GM10248 (cell line): ENCODE measurements at regions of chr6 and their contacts with region 1.

Region 1: DNA sequence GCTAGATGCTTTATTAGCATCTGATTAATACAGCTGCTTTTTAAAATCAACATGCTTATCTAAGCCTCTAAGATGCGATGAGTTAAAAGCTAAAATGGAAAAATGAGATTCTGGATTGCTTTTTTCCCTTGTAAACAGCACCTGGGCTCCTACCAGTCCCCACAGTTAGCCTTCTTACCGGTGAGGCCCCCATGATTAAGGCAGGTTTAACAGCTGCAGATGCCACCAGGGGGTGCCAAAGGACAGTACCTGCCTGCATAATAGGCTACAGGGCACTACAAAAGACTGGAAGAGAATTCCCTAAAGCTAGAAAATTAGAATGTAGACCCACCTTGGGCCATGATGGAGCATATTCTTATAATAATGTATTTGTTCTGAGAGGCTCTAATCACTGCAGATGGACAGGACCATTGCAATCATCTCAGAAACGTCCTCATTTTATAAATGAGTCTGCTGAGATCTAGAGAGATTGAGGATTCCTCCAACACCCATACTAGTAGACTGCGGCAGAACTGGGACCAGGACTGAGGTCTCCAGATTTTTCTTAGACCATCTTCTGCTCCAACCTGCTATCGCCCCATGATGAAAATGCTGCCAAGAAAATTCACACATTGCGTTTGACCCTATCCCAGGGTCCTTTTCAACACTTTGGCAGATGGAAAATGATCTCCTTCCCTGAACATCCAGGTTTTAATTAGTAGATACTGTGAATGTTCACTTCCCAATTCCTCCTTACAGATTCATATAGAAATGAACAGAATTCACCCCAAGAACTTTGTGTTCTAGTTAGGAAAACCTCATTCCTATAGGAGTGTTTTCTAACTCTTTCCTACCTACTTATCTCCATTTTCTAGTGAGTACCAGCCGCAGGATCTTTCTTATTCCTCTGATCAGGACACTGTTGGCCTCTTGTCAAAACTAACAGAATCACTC is 148.8 kb downstream of the RPS12 start:
- DNase-seq: peak; percentile 35
- CTCF ChIP-seq: peak; percentile 82

Region 2: DNA sequence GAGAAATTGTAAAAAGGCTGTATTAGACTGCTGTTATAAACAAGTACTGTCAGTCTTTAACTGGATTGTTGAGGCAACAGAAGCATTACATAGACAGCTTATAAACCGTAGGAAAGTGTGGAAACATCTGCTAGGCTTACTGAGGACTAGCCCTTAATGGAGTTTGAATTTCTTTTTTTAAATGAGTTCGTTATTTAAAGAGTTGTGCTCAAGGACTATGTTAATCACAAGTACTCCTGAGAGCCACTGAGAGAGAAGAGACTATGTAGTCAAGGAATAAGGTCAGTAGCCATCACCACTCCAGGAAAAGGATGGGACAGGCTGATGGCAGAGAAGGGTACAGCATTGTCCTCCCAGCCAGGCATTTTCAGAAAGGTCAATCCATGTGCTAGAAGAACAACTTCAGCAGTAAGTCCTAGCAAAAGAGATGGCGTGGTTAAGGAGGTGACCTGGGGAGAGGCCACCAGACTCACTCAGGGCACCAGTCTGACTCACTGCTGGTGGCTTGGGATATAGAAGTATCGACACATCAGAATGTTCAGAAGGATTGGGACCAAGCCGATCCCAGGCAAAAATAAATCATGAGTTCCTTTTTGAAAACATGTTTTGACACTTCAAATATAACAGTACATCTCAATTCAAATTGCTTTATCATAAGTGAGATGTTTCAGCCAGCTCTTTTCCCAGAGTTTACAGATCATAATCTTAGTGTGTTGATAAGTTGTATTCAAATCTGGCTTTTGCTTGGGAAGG is 142.4 kb before region 1 on chr6:
- CTCF ChIA-PET with region 1: interaction called, 14 read pairs
- POLR2A ChIA-PET with region 1: no interaction called
- DNase-seq: no peak
- CTCF ChIP-seq: no peak

Region 3: GRCh38 chr6:132830334-132830751 is 132.9 kb before region 1 on chr6:
- CTCF ChIA-PET with region 1: interaction called, 13 read pairs
- POLR2A ChIA-PET with region 1: no interaction called
- DNase-seq: no peak
- CTCF ChIP-seq: peak; percentile 37

Region 4: GRCh38 chr6:132952031-132952867 is 11.0 kb before region 1 on chr6:
- CTCF ChIA-PET with region 1: interaction called, 22 read pairs
- POLR2A ChIA-PET with region 1: no interaction called
- DNase-seq: no peak
- CTCF ChIP-seq: no peak

Region 5: GRCh38 chr6:132973514-132973993 is 10.4 kb after region 1 on chr6:
- CTCF ChIA-PET with region 1: interaction called, 24 read pairs
- POLR2A ChIA-PET with region 1: no interaction called
- DNase-seq: no peak
- CTCF ChIP-seq: no peak

Region 6: GRCh38 chr6:133551847-133552341 is 588.7 kb after region 1 on chr6:
- CTCF ChIA-PET with region 1: interaction called, 10 read pairs
- POLR2A ChIA-PET with region 1: no interaction called
- DNase-seq: no peak
- CTCF ChIP-seq: no peak